Mammary epithelial cell (primary cell): ENCODE measurements at regions of chr10 and their contacts with region 1.

Region 1: DNA sequence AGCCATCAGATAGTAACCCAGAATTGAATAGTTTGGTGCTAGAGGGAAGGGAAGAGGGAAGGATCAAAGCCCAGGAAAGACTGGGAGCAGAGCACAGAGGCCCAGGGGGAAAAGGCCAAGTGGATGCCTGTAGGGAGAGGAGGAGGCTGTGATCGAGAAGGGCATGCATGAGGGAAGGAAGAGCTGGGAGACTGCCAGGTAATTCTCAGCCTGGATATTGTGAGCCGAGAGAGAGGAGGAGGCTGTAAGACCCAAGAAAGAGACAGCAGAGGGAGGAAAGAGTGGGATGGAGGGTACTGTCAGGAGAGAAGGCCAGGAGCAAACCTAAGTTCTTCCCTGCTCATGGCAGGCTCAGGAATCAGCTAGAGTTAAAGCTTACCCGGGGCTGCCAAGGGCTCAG is 178.2 kb downstream of the CCDC3 start:
- DNase-seq: no peak
- H3K4me3 ChIP-seq: no peak overlapping the region
- H3K27ac ChIP-seq: no peak overlapping the region
- H3K4me1 ChIP-seq: no peaks in the 10 kb centered on the region
- H3K27me3 ChIP-seq: no peaks in the 10 kb centered on the region
- CTCF ChIP-seq: no peak

Region 2: GRCh38 chr10:12768156-12769100 is 54.9 kb before region 1 on chr10:
- CTCF ChIA-PET with region 1: no interaction called
- dilution Hi-C with region 1: loop called (anchors 5 kb)
- in situ Hi-C with region 1: no loop called
- intact Hi-C with region 1: no loop called
- DNase-seq: peak; percentile 61
- H3K4me3 ChIP-seq: no peak overlapping the region
- H3K27ac ChIP-seq: no peak overlapping the region
- H3K4me1 ChIP-seq: no peaks in the 10 kb centered on the region
- H3K27me3 ChIP-seq: no peaks in the 10 kb centered on the region
- CTCF ChIP-seq: no peak